Activated CD4-positive, alpha-beta memory T cell treated with anti-CD3 and anti-CD28 coated beads for 36 hours (primary cell): ENCODE measurements at regions of chr10 and their contacts with region 1.

Region 1: GRCh38 chr10:71569775-71570588 is 149.6 kb downstream of the C10orf105 start:
- DNase-seq: peak; percentile 83
- H3K4me3 Mint-ChIP-seq: no peak overlapping the region
- H3K27ac Mint-ChIP-seq: no peak overlapping the region
- H3K4me1 Mint-ChIP-seq: no peaks in the 10 kb centered on the region
- H3K27me3 Mint-ChIP-seq: no peaks in the 10 kb centered on the region

Region 2: GRCh38 chr10:71314028-71314693 is 255.8 kb before region 1 on chr10:
- CTCF ChIA-PET with region 1: interaction called, 87 read pairs
- POLR2A ChIA-PET with region 1: interaction called, 3 read pairs
- intact Hi-C with region 1: loop called (anchors 2 kb)
- DNase-seq: peak; percentile 67
- H3K4me3 Mint-ChIP-seq: no peak overlapping the region
- H3K27ac Mint-ChIP-seq: no peak overlapping the region
- H3K4me1 Mint-ChIP-seq: peaks cover 9% of the 10 kb centered on the region
- H3K27me3 Mint-ChIP-seq: peaks cover 7% of the 10 kb centered on the region

Region 3: DNA sequence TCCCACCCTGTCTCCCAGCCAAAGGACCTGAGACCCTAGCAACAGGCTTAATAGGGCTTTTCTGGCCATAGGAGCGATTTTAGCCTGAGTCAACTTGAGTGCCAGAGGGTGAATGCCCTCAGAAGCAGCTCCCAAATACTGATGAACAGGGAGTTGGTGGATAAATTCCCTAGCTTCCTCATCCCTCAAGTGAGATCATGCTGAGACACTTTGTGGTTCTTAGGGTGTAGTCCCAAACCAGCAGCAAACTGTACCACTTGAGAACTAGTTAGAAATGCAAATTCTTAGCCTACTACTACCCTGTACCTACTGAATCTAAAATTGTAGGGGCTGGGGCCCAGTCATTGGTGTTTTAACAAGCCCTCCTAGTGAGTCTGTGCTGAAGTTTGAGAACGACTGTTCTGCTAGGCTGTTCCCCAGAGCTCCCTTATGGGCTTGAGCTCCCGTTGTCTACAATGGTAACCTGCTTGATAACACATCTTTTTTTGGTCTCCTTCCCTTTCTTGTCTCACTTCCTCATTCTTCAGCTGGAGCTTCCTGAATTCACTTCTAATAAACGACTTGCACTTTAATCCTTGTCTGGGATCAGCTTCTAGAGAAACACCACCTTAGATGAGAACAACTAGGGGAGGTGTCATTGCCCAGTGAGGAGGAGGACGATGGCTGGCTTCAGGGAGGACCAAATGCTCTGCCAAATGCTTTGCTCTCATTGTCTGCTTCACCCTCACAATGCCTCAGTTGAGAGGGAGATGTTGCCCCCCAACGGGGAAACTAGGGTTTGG is 191.5 kb before region 1 on chr10:
- CTCF ChIA-PET with region 1: interaction called, 68 read pairs
- POLR2A ChIA-PET with region 1: no interaction called
- intact Hi-C with region 1: no loop called
- DNase-seq: no peak
- H3K4me3 Mint-ChIP-seq: no peak overlapping the region
- H3K27ac Mint-ChIP-seq: no peak overlapping the region
- H3K4me1 Mint-ChIP-seq: peaks cover 7% of the 10 kb centered on the region
- H3K27me3 Mint-ChIP-seq: no peaks in the 10 kb centered on the region

Region 4: DNA sequence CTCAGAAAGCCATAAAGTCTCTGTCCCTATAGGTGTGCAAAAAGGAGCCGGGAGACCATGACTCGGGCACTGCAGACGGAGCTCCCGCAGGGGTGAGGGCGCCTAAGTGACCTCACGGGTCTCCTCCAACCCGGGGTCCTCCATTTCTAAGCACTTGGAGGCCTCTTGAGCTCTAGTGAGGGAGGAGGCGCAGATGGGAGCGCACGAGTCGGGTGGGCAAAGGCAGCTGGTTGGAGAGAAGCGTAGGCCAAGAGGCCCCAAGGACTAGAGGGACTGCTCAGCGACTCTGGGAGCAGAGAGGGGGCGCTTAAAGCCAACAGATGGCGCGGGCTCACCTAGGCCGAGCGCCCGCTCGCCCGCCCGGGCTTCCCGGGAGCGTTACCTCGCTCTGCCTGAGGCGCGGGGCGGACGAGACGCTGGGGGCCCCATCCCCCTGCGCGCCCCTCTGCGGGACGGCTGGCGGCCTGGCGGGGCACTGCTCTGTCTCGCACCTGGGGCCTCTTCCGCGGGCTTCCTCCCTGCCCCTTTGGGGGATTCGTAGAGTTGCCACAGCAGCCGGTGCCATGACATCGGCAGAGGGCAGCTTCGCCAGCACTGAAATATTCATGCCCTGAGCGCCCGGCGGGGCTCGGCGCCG is 173.8 kb before region 1 on chr10:
- CTCF ChIA-PET with region 1: interaction called, 50 read pairs
- POLR2A ChIA-PET with region 1: no interaction called
- intact Hi-C with region 1: loop called (anchors 2 kb)
- DNase-seq: peak; percentile 50
- H3K4me3 Mint-ChIP-seq: no peak overlapping the region
- H3K27ac Mint-ChIP-seq: no peak overlapping the region
- H3K4me1 Mint-ChIP-seq: peaks cover 7% of the 10 kb centered on the region
- H3K27me3 Mint-ChIP-seq: peaks cover 51% of the 10 kb centered on the region

Region 5: GRCh38 chr10:71494980-71495381 is 75.0 kb before region 1 on chr10:
- CTCF ChIA-PET with region 1: interaction called, 13 read pairs
- POLR2A ChIA-PET with region 1: no interaction called
- intact Hi-C with region 1: no loop called
- DNase-seq: peak; percentile 13
- H3K4me3 Mint-ChIP-seq: no peak overlapping the region
- H3K27ac Mint-ChIP-seq: no peak overlapping the region
- H3K4me1 Mint-ChIP-seq: no peaks in the 10 kb centered on the region
- H3K27me3 Mint-ChIP-seq: no peaks in the 10 kb centered on the region

Region 6: DNA sequence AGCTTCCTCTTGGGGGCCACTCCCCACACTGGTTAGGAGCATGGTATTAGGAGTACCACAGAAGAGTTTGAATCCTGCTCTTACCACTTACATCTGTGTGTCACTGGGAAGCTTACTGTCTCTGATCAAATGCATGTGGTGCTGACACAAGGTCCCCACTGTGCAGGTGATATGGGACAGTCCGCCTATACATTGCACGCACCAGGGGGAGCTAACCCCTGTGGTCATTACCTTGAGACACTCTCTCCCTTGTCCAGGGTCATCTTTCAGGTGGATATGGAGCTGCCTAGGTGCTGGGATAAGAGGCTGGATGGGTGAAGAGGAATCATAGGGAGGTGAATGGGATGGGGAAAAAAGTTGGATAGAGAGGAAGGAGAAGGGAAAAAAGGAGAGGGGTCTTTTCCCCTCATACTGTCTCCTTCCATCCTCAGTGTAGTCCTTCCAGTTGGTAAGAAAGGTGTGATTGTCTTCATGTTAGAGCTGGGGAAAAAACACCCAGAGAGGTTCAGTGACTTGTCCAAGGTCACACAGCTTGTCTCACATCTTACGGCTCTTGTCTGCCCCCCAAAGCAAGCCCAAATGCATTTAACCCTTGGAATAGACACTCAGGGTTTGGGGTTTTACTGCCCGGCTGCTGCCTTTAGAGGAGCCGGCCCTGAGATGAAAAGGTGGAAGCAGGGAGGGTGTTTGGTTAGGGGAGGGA is 47.4 kb before region 1 on chr10:
- CTCF ChIA-PET with region 1: interaction called, 11 read pairs
- POLR2A ChIA-PET with region 1: no interaction called
- intact Hi-C with region 1: no loop called
- DNase-seq: no peak
- H3K4me3 Mint-ChIP-seq: no peak overlapping the region
- H3K27ac Mint-ChIP-seq: no peak overlapping the region
- H3K4me1 Mint-ChIP-seq: no peaks in the 10 kb centered on the region
- H3K27me3 Mint-ChIP-seq: peaks cover 25% of the 10 kb centered on the region

Region 7: DNA sequence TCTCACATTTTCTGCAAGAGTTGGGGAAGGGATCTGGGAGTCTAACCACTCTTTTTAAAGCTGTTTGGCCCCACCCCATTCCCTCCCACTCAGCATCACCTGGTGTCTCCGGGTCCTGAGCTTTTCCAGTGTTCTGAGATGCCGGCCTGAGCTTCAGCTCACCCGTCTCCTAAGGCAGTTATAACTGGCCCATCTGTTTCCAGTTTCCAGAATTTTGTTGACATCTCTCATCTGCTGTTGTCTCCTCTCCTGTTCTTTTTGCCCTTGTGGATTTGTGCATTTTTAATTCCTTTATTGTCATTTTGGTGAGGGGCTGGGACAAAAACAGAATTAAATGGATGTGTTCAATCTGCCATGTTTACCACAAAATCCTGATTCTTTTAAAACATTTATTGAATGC is 11.0 kb before region 1 on chr10:
- CTCF ChIA-PET with region 1: interaction called, 14 read pairs
- POLR2A ChIA-PET with region 1: no interaction called
- intact Hi-C with region 1: no loop called
- DNase-seq: no peak
- H3K4me3 Mint-ChIP-seq: no peak overlapping the region
- H3K27ac Mint-ChIP-seq: no peak overlapping the region
- H3K4me1 Mint-ChIP-seq: no peaks in the 10 kb centered on the region
- H3K27me3 Mint-ChIP-seq: peaks cover 14% of the 10 kb centered on the region

Region 8: GRCh38 chr10:71685554-71686232 is 115.7 kb after region 1 on chr10:
- CTCF ChIA-PET with region 1: no interaction called
- POLR2A ChIA-PET with region 1: no interaction called
- intact Hi-C with region 1: no loop called
- DNase-seq: no peak
- H3K4me3 Mint-ChIP-seq: no peak overlapping the region
- H3K27ac Mint-ChIP-seq: no peak overlapping the region
- H3K4me1 Mint-ChIP-seq: no peaks in the 10 kb centered on the region
- H3K27me3 Mint-ChIP-seq: no peaks in the 10 kb centered on the region